Right ventricle myocardium superior (tissue), 1 donor: ENCODE measurements at regions of chrX and their contacts with region 1.

Region 1: GRCh38 chrX:47193475-47194193 is at the start of gene UBA1:
- DNase-seq: peak; percentile 94
- ATAC-seq: peak; percentile 94
- total RNA-seq, gene UBA1: 89.8 TPM

Region 2: DNA sequence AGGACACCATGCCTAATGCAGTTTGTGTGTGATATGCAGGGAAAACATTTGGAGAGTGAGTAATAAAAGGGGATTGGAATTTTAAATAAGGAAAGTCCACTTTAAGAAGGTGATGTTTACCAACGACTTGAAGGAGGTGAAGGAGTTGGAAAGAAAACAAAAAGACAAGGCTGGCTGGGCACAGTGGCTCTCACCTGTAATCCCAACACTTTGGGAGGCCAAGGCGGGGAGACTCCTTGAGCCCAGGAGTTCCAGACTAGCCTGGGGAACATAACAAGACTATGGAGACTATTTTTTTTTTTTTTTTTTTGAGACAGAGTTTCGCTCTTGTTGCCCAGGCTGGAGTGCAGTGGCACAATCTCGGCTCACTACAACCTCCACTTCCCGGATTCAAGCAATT is 60.1 kb before region 1 on chrX:
- intact Hi-C with region 1: no loop called
- DNase-seq: no peak
- ATAC-seq: no peak

Region 3: DNA sequence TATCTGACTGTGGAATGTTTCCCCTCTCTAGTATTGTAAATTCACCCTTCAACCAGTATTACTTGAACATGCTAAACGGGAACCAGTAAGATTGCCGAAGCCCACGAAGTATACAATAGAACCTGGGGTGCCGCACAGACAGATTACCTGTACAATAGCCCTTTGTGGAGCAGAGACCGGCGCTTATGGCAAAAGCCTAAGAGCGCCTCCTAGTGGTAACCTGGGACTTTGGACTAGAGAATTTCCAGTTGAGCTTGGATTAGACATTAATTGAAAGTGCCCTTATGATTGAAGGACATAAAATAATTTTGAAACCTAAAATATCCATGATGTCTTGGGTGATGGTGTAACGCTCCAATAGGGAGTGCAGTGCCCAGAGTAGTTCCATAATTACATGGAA is 190.9 kb after region 1 on chrX:
- intact Hi-C with region 1: loop called (anchors 10 kb)
- DNase-seq: no peak
- ATAC-seq: peak; percentile 66

Region 4: DNA sequence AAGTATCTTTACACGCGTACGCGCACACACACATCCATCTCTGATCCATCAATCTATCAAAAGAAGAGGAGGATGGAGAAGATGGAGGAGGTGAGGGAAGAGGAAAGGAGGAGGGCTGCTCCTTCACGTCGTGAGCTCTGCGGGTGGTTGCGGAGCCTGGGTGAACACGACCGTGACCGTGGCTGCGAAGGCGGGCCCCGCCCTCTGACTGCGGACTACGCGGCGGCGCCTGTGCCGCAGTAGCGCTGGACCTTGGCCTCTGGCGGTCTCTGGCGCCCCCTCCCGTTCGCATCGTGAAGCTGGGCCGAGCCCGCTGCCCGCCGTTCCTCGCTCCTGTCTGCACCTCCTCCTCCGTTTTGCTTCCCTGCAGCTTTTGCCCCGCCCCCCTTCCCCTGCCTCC is 329.7 kb after region 1 on chrX:
- intact Hi-C with region 1: loop called (anchors 5 kb)
- DNase-seq: peak; percentile 89
- ATAC-seq: peak; percentile 100